ENCODE measurements at regions of chr5 and their contacts with region 1.

Region 1: DNA sequence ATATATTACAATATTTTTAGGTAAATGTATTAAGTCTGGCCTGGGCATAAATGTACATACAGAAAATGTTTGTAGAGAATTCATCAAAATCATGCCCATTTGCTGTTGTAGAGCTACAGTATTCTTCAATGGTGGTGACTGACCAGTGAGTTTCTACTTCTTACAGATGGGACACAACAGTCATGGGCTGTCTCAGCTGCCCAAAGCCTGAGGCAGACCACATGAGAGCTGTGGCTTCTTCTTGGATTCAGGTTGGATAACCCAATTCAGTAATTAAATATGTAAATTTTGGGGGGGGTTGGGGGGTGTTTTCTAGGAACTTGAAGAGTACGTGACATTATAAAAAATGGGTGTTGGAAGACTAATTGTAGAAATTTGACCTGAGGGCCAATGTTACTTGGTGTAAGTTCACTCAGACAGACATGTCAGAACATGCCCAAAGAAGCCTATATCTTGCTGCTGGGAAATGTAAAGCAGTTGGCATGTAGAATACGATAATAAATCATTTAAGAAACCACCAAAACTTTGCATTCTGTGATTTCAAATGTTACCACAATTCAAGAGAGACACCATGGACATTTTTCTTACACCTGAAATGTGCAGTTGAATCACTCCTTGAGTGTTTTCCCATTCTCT is 17.9 kb downstream of the STARD4 start:
- DNase-seq: peak; percentile 35
- ATAC-seq: peak; percentile 50
- H3K4me3 ChIP-seq: no peak overlapping the region
- H3K27ac ChIP-seq: peak overlapping the region; percentile 62
- H3K4me1 ChIP-seq: peaks cover 15% of the 10 kb centered on the region; the same call in 1 of the 2 replicates
- H3K27me3 ChIP-seq: no peaks in the 10 kb centered on the region
- CTCF ChIP-seq: no peak
- EP300 ChIP-seq: peak in 1 of 2 experiments; percentile 14; a peak in 1 of 4 replicates
- POLR2A ChIP-seq: no peak
- RAD21 ChIP-seq: no peak

Region 2: GRCh38 chr5:110716247-110717245 is 777.9 kb before region 1 on chr5:
- CTCF ChIA-PET with region 1: no interaction called
- POLR2A ChIA-PET with region 1: no interaction called
- RAD21 ChIA-PET with region 1: no interaction called
- SMC1A ChIA-PET with region 1: no interaction called
- in situ Hi-C with region 1: no loop called
- intact Hi-C with region 1: no loop called
- DNase-seq: peak; percentile 32
- ATAC-seq: peak; percentile 97
- H3K4me3 ChIP-seq: no peak overlapping the region
- H3K27ac ChIP-seq: no peak overlapping the region
- H3K4me1 ChIP-seq: peaks cover 2% of the 10 kb centered on the region; the same call in 1 of the 2 replicates
- H3K27me3 ChIP-seq: no peaks in the 10 kb centered on the region
- CTCF ChIP-seq: peak in 1 of 3 experiments; percentile 17; a peak in 1 of 6 replicates
- EP300 ChIP-seq: no peak
- POLR2A ChIP-seq: no peak
- RAD21 ChIP-seq: 0 out of 2 replicates have a peak, but pooled peaks have one; percentile 19

Region 3: GRCh38 chr5:111478266-111478665 is 16.2 kb before region 1 on chr5:
- CTCF ChIA-PET with region 1: interaction called, 8 read pairs
- POLR2A ChIA-PET with region 1: interaction called, 4 read pairs
- RAD21 ChIA-PET with region 1: no interaction called
- SMC1A ChIA-PET with region 1: interaction called, 23 read pairs
- in situ Hi-C with region 1: no loop called
- intact Hi-C with region 1: no loop called
- DNase-seq: no peak
- ATAC-seq: no peak
- H3K4me3 ChIP-seq: no peak overlapping the region
- H3K27ac ChIP-seq: no peak overlapping the region
- H3K4me1 ChIP-seq: no peaks in the 10 kb centered on the region
- H3K27me3 ChIP-seq: no peaks in the 10 kb centered on the region
- CTCF ChIP-seq: peak in 1 of 3 experiments; percentile 15; a peak in 1 of 6 replicates
- EP300 ChIP-seq: no peak
- POLR2A ChIP-seq: no peak
- RAD21 ChIP-seq: peak; percentile 50

Region 4: DNA sequence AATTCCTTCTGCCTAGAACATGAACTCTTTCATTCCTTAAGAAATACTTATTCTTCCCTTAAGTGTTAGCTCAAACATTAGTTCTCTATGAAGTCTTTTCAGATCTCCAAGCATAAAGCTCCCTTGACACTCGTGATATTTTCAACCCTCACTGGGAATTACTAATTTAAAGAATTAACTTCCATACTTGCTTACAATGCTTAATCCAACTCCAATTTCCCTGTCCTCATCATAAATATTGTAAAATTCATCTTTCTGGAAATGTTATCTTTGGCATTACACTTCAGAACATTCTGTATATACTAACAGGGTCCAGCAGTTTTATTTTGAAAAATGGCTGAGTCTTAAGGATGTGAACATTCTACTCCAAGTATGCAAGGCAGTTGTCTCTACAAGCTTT is 10.6 kb after region 1 on chr5:
- CTCF ChIA-PET with region 1: interaction called, 45 read pairs
- POLR2A ChIA-PET with region 1: interaction called, 34 read pairs
- RAD21 ChIA-PET with region 1: interaction called, 55 read pairs
- SMC1A ChIA-PET with region 1: interaction called, 46 read pairs
- in situ Hi-C with region 1: no loop called
- intact Hi-C with region 1: no loop called
- DNase-seq: no peak
- ATAC-seq: no peak
- H3K4me3 ChIP-seq: no peak overlapping the region
- H3K27ac ChIP-seq: no peak overlapping the region
- H3K4me1 ChIP-seq: no peaks in the 10 kb centered on the region
- H3K27me3 ChIP-seq: no peaks in the 10 kb centered on the region
- CTCF ChIP-seq: no peak
- EP300 ChIP-seq: no peak
- POLR2A ChIP-seq: no peak
- RAD21 ChIP-seq: no peak